HAP-1 (cell line): ENCODE measurements at regions of chr1 and their contacts with region 1.

Region 1: GRCh38 chr1:27659497-27660299 is 12.3 kb downstream of the IFI6 start:
- DNase-seq: peak; percentile 85 to 95
- H3K4me3 ChIP-seq: peak overlapping the region; percentile 31
- H3K4me1 ChIP-seq: peaks cover 13% of the 10 kb centered on the region
- H3K27me3 ChIP-seq: no peaks in the 10 kb centered on the region

Region 2: GRCh38 chr1:27605796-27606707 is 53.6 kb before region 1 on chr1:
- in situ Hi-C with region 1: loop called (anchors 5 kb)
- DNase-seq: peak; percentile 52 to 76
- H3K4me3 ChIP-seq: no peak overlapping the region
- H3K4me1 ChIP-seq: no peaks in the 10 kb centered on the region
- H3K27me3 ChIP-seq: no peaks in the 10 kb centered on the region; the same call in 1 of the 2 replicates

Region 3: GRCh38 chr1:29202584-29203340 is 1543.1 kb after region 1 on chr1:
- in situ Hi-C with region 1: no loop called
- DNase-seq: peak; percentile 71 to 96
- H3K4me3 ChIP-seq: no peak overlapping the region
- H3K4me1 ChIP-seq: no peaks in the 10 kb centered on the region
- H3K27me3 ChIP-seq: no peaks in the 10 kb centered on the region